Activated CD8-positive, alpha-beta T cell treated with anti-CD3 and anti-CD28 coated beads for 36 hours (primary cell): ENCODE measurements at regions of chr10 and their contacts with region 1.

Region 1: DNA sequence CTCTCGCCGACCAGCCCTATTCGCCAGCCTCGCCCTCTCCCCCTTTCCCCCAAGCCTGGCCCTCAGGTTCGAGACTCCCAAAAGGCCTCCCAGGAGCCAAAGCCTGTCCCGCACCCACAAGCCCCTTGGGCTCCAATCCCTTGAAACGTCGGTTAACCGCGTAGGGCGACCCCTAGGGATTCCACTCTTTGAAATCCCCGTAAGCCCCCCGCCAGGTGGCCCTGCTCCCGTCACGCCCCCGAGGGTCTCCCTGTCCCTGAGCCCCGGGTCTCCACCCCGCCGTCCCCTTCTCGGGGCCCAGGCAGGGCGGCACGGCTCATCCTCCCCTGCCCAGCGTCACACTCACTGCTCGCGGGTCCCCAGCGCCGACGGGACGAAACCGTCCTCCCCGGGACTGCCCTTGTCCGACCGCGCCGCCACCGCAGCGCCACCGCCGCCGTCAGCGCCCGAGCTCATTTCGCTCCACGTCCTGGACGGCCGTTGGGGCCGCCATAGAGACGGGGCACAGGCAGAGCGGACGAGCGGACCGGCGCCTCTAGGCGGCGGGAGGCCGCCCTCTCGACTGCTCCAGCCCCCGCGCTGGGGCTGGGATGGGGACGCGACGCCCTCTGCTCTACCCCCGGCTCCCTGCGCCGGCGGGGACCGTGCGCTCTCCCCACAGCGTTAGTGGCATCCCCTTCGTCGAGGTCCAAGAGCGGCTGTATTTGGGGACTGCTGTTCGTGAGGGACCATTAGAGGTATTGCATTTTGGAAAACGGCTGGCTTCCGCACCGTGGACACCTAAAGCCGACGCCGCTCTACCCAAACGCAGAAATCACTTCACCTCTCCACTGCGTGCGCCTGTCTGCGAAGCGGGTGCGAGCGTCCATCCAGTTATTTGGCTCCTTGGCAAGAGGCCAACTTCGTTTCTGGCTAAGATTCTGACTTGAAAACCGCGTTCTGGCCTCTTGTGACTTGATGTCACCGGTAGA is at the start of gene EEF1AKMT2:
- DNase-seq: peak; percentile 87
- ATAC-seq: peak; percentile 97
- H3K4me3 Mint-ChIP-seq: peak within 1 kb of the TSS; percentile 88
- H3K27ac Mint-ChIP-seq: peak within 1 kb of the TSS; percentile 91
- H3K4me1 Mint-ChIP-seq: peaks cover 14% of the 10 kb centered on the region
- H3K27me3 Mint-ChIP-seq: no peaks in the 10 kb centered on the region
- CTCF ChIP-seq: no peak
- total RNA-seq, gene EEF1AKMT2: 24.2 to 25.7 TPM

Region 2: GRCh38 chr10:124802313-124802675 is 10.6 kb after region 1 on chr10:
- CTCF ChIA-PET with region 1: no interaction called
- POLR2A ChIA-PET with region 1: interaction called, 12 read pairs
- intact Hi-C with region 1: no loop called
- DNase-seq: peak; percentile 46
- ATAC-seq: no peak
- H3K4me3 Mint-ChIP-seq: peak overlapping the region; percentile 97
- H3K27ac Mint-ChIP-seq: peak overlapping the region; percentile 91
- H3K4me1 Mint-ChIP-seq: peaks cover 18% of the 10 kb centered on the region
- H3K27me3 Mint-ChIP-seq: no peaks in the 10 kb centered on the region
- CTCF ChIP-seq: no peak